Posterior cingulate gyrus (tissue), 11 donors: ENCODE measurements at regions of chr6 and their contacts with region 1.

Region 1: DNA sequence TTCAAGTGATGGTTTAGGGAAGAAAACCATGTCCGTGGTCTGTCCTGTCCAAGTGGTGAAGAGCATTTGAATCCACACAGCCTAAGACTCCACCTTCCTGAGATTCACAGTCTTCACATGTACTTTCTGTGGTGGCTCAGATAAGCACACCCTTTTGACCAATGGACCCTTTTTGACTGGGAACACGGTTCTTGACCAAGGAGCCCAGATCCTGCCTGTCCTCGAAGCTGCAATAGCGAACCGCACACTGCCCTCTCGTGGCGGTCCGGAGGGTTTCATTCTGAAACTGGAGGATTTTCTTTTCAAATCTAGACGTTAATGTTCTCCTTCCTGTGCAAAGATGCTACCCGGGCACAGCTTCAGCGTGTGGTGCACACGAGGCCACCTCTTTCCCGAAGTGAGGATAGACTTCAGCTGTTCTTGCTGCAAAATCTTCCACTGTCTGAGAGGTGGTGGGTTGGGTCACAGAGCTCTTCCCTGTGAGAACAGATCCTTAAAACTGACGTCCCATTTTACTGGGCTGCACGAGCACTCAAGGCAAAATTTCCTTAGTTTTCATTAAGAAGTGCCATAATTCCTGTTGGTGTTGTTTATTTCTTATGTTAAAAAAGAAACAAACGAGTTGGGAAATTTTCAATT is 90.5 kb downstream of the SYNJ2 start:
- DNase-seq: peak in 9 of 10 donors; percentile 64 to 97 (median 80)

Region 2: DNA sequence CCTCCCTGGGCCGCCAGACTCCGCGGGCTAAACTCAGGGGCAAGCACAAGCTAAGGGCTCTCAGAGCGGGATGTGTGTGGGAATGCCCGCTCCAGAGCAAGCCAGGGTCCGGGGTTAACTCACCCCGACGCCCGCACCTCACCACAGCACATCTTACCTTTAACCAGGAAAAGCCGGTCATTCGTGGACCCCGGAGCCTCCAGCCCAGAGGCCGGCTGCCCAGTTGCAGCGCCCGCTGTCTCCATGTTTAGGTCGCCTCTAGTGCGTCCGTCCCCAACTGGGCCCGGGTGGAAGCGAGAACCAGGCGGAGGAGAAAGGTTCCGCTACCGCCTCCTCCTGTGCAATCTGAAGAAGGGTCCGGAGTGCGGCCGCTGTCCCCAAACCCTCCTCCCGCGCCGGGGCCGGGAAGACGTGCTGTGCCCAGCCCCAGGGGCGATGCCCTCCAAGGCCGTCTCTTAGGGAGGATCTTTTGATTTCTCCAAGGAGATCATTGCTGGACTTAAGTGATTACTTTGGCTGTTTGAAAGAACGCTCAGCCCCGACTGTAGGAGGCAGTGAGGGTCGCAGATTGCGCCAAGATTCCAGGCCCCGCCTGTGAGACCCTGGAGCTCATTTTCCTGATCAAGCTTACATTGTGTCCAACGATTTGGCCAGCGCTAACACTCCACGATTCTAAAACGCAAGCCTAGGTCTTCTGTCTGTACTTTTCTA is 748.8 kb before region 1 on chr6 and contains the start of gene TMEM242:
- intact Hi-C with region 1: loop called (anchors 5 kb)
- DNase-seq: peak; percentile 87 to 98 (median 90)

Region 3: DNA sequence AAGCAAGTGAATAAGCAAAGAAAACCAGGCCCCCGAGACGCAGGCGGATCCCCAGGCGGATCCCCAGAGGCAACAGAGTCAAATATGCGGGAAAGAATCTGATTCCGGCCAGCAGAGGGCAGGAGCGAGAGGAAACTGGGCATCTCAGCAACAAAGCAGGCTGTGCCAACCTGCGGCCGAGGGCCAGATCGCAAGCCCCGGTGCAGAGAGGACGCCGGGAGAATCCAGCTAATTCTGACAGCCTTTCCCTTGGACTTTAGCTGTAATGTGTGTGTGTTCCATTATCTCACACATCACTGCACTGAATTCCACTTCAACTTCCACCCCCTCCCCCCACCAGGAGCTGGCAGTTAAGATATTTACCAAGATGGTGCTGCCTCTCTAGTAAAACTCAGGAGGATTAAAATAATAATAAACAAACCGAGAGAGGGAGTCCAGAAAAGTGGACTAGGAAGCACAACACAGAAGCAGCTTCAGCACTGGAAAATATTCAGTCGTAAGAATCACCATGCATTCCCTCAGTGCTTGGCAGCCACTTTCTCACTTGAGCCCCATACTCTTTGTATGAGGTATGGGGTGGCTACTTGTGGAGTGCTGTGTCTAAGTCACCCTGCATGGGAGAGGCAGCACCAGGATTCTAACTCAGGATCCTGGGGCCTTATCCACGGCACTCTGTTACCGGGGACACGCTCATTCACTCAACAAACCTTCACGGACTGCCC is 315.3 kb before region 1 on chr6:
- intact Hi-C with region 1: loop called (anchors 5 kb)
- DNase-seq: peak; percentile 76 to 97 (median 92)

Region 4: GRCh38 chr6:157813757-157814455 is 258.3 kb before region 1 on chr6:
- intact Hi-C with region 1: no loop called
- DNase-seq: no peak

Region 5: DNA sequence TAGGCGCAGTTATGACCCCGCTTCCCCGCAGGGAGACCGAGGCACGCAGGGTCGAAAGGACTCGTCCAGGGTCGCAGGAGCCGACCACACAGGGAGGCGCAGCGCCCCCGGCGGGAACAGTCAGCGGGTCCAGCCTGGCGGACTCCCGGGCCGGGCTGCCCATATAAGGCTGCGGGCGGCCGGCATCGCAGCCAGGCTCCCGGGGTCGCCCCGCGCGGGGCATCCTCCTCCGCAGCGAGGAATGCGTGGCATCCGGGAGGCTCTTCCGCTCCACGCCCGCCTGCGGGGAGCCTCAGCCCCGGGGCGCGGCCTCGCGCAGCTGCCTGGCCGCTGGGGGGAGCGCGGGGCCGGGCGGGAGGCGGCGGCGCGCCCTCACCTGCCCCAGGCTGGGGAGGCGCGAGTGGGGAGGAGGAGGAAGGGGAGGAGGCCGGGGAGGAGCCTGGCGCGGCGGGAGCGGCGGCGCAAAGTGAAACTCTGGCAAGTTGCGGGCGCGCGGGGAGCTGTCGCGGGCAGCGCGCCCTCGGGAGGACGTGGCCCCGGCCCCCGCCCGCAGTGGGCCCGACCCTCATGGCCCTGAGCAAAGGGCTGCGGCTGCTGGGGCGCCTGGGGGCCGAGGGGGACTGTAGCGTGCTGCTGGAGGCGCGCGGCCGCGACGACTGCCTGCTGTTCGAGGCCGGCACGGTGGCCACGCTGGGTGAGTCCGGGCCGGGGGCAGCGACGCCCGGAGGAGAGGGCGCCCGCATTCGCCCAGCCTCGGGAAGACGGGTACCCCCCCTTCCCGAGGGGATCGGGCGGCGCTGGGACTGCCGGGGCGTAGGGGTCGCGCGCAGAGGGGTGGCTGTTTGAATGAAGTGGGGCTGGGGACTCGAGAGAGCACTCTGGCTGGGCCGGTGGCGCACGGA is 90.6 kb before region 1 on chr6 and contains the start of gene SYNJ2:
- intact Hi-C with region 1: loop called (anchors 5 kb)
- DNase-seq: peak; percentile 58 to 96 (median 64)

Region 6: GRCh38 chr6:158039571-158040050 is 32.6 kb before region 1 on chr6:
- intact Hi-C with region 1: loop called (anchors 5 kb)
- DNase-seq: peak in 4 of 10 donors; percentile 58 to 91 (median 74)

Region 7: GRCh38 chr6:158121335-158121734 is 49.1 kb after region 1 on chr6:
- intact Hi-C with region 1: no loop called
- DNase-seq: no peak

Region 8: DNA sequence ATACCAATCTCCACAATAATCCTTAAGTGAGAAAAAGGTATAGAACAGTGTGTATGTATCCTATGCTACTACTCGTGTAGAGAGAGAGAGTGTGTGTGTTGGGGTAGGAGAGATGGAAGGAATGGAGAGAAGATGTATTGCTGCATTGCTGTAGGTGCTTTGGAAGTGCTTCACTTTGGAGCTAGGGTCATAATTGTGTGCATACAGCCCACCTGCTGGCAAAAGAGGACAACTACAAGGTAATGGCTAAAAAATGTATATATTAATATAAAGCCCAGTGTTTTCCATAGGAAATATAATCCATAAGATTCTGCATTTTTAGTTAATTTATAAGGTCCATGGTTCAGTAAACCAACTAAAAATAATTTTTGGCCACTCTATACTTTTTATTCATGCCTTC is 59.7 kb after region 1 on chr6:
- intact Hi-C with region 1: no loop called
- DNase-seq: no peak

Region 9: DNA sequence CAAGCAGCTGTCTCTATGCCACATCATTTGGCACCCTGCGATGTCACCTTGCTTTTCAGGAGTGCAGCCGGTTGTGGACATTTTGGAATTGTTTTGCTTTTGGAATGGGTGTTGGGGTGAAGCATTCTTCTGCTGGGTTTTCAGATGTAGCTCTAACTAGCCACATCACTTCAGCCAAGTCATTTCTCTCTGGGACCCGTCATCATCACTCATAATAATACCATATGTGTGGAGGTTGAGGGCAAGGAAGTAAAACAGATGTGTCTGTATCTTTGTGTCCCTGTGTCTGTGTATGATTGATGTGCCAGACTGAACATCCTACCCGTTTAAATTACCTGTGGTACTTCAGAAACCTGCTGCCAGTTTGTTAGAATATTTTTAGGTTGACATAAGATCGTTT is 190.6 kb after region 1 on chr6:
- intact Hi-C with region 1: no loop called
- DNase-seq: no peak